ENCODE measurements at regions of chr5 and their contacts with region 1.

Region 1: DNA sequence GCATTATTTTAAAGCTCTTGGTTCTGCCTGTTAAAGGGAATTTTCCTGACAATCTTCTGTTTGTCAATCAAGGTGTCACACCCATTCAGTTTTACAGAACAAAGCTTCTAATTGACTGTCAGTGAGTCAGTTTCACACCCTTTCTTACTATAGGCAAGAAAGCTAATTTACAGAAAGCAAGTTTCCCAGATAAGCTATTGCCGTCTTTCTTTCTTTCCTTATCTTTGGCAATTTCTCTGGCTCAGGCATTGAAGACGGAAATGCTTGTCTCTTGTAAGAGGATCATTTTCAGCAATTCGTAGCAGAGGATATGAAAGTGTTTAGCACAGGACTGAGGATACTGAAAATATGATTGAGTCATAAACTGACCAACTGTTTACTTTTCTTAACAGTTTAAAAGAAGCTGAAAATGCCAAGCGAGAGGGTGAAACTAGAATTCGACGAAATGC is 27.0 kb downstream of the SPINK5 start:
- DNase-seq: peak; percentile 12
- H3K4me3 Mint-ChIP-seq: peak overlapping the region; percentile 70
- H3K27ac Mint-ChIP-seq: peak overlapping the region; percentile 96
- H3K4me1 Mint-ChIP-seq: peaks cover 45% of the 10 kb centered on the region
- H3K27me3 Mint-ChIP-seq: no peaks in the 10 kb centered on the region
- CTCF ChIP-seq: no peak

Region 2: GRCh38 chr5:147963948-147964693 is 126.7 kb before region 1 on chr5:
- CTCF ChIA-PET with region 1: no interaction called
- intact Hi-C with region 1: loop called (anchors 5 kb)
- DNase-seq: peak; percentile 21
- H3K4me3 Mint-ChIP-seq: no peak overlapping the region
- H3K27ac Mint-ChIP-seq: peak overlapping the region; percentile 6
- H3K4me1 Mint-ChIP-seq: peaks cover 30% of the 10 kb centered on the region
- H3K27me3 Mint-ChIP-seq: no peaks in the 10 kb centered on the region
- CTCF ChIP-seq: no peak

Region 3: GRCh38 chr5:148011401-148012132 is 79.2 kb before region 1 on chr5:
- CTCF ChIA-PET with region 1: no interaction called
- intact Hi-C with region 1: loop called (anchors 5 kb)
- DNase-seq: peak; percentile 74
- H3K4me3 Mint-ChIP-seq: peak overlapping the region; percentile 12
- H3K27ac Mint-ChIP-seq: peak overlapping the region; percentile 80
- H3K4me1 Mint-ChIP-seq: peaks cover 30% of the 10 kb centered on the region
- H3K27me3 Mint-ChIP-seq: no peaks in the 10 kb centered on the region
- CTCF ChIP-seq: no peak